Heart right ventricle (tissue), 16 donors: ENCODE measurements at regions of chr7 and their contacts with region 1.

Region 1: GRCh38 chr7:50418086-50418515 is 32.0 kb downstream of the FIGNL1 start:
- DNase-seq: peak; percentile 53 to 64
- ATAC-seq: peak; percentile 67 to 93 (median 87)
- H3K4me3 ChIP-seq: no peak overlapping the region
- H3K27ac ChIP-seq: no peak overlapping the region
- H3K4me1 ChIP-seq: peaks cover 0 to 33% (median 0%) of the 10 kb centered on the region in 9 donors
- H3K27me3 ChIP-seq: peaks cover 0 to 4% (median 0%) of the 10 kb centered on the region in 7 donors
- CTCF ChIP-seq: peak; percentile 42 to 87 (median 74)

Region 2: GRCh38 chr7:50092579-50093491 is 325.3 kb before region 1 on chr7 and contains the start of gene ZPBP:
- intact Hi-C with region 1: loop called in 4 of 10 experiments (anchors 5 kb)
- DNase-seq: peak in 1 of 2 donors; percentile 16
- ATAC-seq: peak in 6 of 8 donors; percentile 20 to 63 (median 48)
- H3K4me3 ChIP-seq: peak within 1 kb of the TSS; percentile 35 to 55 (median 46)
- H3K27ac ChIP-seq: no peak within 1 kb of the TSS
- H3K4me1 ChIP-seq: peaks cover 0 to 9% (median 4%) of the 10 kb centered on the region in 9 donors
- H3K27me3 ChIP-seq: peaks cover 0 to 25% (median 0%) of the 10 kb centered on the region in 7 donors
- CTCF ChIP-seq: peak; percentile 56 to 80 (median 68)
- total RNA-seq, gene ZPBP: not detected

Region 3: GRCh38 chr7:50142425-50143017 is 275.6 kb before region 1 on chr7:
- intact Hi-C with region 1: loop called in 7 of 10 experiments (anchors 5 to 10 kb)
- DNase-seq: peak in 1 of 2 donors; percentile 13
- ATAC-seq: no peak
- H3K4me3 ChIP-seq: no peak overlapping the region
- H3K27ac ChIP-seq: no peak overlapping the region
- H3K4me1 ChIP-seq: peaks cover 0 to 5% (median 0%) of the 10 kb centered on the region in 9 donors
- H3K27me3 ChIP-seq: peaks cover 0 to 37% (median 14%) of the 10 kb centered on the region in 7 donors
- CTCF ChIP-seq: peak; percentile 48 to 80 (median 73)

Region 4: GRCh38 chr7:50206453-50207250 is 211.4 kb before region 1 on chr7:
- intact Hi-C with region 1: loop called (anchors 2 to 10 kb)
- DNase-seq: no peak
- ATAC-seq: peak in 3 of 8 donors; percentile 14 to 39 (median 18)
- H3K4me3 ChIP-seq: no peak overlapping the region
- H3K27ac ChIP-seq: peak overlapping the region in 1 of 10 donors; percentile 57
- H3K4me1 ChIP-seq: peaks cover 0 to 50% (median 0%) of the 10 kb centered on the region in 9 donors
- H3K27me3 ChIP-seq: peaks cover 0 to 27% (median 4%) of the 10 kb centered on the region in 7 donors
- CTCF ChIP-seq: no peak

Region 5: GRCh38 chr7:50534690-50535290 is 116.7 kb after region 1 on chr7:
- intact Hi-C with region 1: no loop called
- DNase-seq: no peak
- ATAC-seq: peak in 1 of 8 donors; percentile 31
- H3K4me3 ChIP-seq: no peak overlapping the region
- H3K27ac ChIP-seq: no peak overlapping the region
- H3K4me1 ChIP-seq: peaks cover 0 to 10% (median 0%) of the 10 kb centered on the region in 9 donors
- H3K27me3 ChIP-seq: peaks cover 0 to 15% (median 5%) of the 10 kb centered on the region in 7 donors
- CTCF ChIP-seq: no peak

Region 6: DNA sequence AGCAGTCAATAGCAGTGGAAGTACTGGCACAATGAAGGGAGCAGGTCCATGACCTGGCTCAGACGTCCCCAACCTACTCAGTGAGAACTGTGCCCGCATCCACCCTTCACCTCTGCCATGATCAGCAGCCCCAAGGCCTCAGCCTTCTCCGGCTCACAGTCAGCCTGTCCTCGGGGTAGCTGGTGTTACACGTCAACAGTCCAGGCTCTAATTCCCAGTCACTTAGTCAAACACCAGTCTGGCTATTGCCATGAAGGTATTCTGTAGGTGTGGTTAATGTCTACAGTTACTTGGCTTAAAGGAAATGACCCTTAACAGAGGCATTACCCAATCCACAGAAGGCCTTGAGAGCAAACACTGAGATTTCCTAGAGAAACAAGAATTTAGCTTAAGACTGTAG is 315.5 kb after region 1 on chr7:
- intact Hi-C with region 1: no loop called
- DNase-seq: no peak
- ATAC-seq: no peak
- H3K4me3 ChIP-seq: no peak overlapping the region
- H3K27ac ChIP-seq: no peak overlapping the region
- H3K4me1 ChIP-seq: peaks cover 0 to 64% (median 37%) of the 10 kb centered on the region in 9 donors
- H3K27me3 ChIP-seq: no peaks in the 10 kb centered on the region
- CTCF ChIP-seq: no peak